Activated T-helper 2 cell treated with anti-CD3 and anti-CD28 coated beads, Interferon-gamma antibody, Interleukin-2, Interleukin-4, amounts not matched to agents 10 μg/mL and 5 μg/mL and 100 μg/mL, durations not matched to agents 14 hours and 24 hours and 36 hours (primary cell): ENCODE measurements at regions of chr17 and their contacts with region 1.

Region 1: DNA sequence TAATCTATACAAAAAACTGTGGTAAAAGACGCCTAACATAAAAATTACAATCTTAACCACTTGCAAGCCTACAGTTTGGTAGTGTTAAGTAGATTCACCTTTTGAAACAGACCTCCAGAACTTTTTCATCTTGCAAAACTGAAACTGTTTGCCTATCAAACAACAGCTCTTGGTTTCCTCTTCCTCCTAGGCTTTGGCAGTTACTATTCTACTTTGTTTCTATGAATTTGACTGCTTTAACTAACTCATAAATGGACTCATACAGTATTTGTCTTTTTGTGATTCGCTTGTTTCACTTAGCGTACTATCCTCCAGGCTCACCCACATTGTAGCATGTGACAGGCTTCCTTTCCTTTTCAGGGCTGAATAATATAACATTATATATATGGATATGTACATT is 97.0 kb downstream of the PRKCA start:
- DNase-seq: no peak
- H3K4me3 Mint-ChIP-seq: peak overlapping the region; percentile 47
- H3K27ac Mint-ChIP-seq: peak overlapping the region; percentile 86
- H3K4me1 Mint-ChIP-seq: peaks cover 80% of the 10 kb centered on the region
- H3K27me3 Mint-ChIP-seq: no peaks in the 10 kb centered on the region

Region 2: GRCh38 chr17:66310528-66311148 is 88.8 kb before region 1 on chr17:
- intact Hi-C with region 1: loop called (anchors 1 kb)
- DNase-seq: no peak
- H3K4me3 Mint-ChIP-seq: peak overlapping the region; percentile 71
- H3K27ac Mint-ChIP-seq: peak overlapping the region; percentile 92
- H3K4me1 Mint-ChIP-seq: peaks cover 84% of the 10 kb centered on the region
- H3K27me3 Mint-ChIP-seq: no peaks in the 10 kb centered on the region

Region 3: DNA sequence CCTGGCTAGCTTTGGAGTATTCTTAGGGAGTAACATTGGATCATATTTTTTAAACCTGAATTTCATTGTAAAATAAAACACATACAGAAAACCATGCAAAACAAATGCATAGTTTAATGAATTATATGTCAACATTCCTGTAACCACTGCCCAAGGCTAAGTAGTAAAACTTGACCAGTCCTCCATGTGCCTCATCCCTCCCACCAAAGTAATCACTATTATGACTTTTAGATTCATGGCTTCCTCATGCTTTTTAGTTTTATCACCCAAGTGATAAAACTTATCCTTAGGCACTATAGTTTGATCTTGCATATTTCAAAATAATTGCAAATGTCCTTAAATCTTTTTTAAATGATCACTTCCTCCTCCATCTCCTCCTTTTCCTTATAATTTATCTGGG is 76.7 kb before region 1 on chr17:
- intact Hi-C with region 1: no loop called
- DNase-seq: no peak
- H3K4me3 Mint-ChIP-seq: no peak overlapping the region
- H3K27ac Mint-ChIP-seq: no peak overlapping the region
- H3K4me1 Mint-ChIP-seq: peaks cover 42% of the 10 kb centered on the region
- H3K27me3 Mint-ChIP-seq: no peaks in the 10 kb centered on the region

Region 4: GRCh38 chr17:66364990-66365490 is 34.4 kb before region 1 on chr17:
- intact Hi-C with region 1: loop called (anchors 1 kb)
- DNase-seq: no peak
- H3K4me3 Mint-ChIP-seq: peak overlapping the region; percentile 72
- H3K27ac Mint-ChIP-seq: peak overlapping the region; percentile 94
- H3K4me1 Mint-ChIP-seq: peaks cover 84% of the 10 kb centered on the region
- H3K27me3 Mint-ChIP-seq: no peaks in the 10 kb centered on the region

Region 5: GRCh38 chr17:66373944-66374817 is 25.3 kb before region 1 on chr17:
- intact Hi-C with region 1: loop called (anchors 1 kb)
- DNase-seq: peak; percentile 53
- H3K4me3 Mint-ChIP-seq: peak overlapping the region; percentile 64
- H3K27ac Mint-ChIP-seq: peak overlapping the region; percentile 89
- H3K4me1 Mint-ChIP-seq: peaks cover 67% of the 10 kb centered on the region
- H3K27me3 Mint-ChIP-seq: no peaks in the 10 kb centered on the region

Region 6: DNA sequence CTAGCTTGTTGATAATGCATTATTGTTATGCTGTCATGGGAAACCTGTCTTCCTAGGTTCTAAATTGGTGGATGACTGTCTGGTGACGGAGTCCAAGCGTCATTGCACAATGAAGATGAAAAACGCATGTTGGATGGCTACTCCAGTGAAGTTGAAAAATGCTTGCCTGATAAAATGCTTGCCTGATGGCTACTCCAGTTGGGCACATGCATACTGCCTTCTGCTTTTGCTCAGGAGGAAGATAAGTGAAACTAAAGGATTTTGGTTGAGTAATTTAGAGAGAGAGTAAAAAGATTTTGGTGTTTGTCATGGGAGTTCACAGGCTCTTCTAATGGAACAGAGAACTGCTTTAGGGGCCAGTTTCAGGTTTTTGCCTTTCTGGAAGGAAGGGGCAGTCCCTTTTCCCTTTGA is 21.5 kb after region 1 on chr17:
- intact Hi-C with region 1: loop called (anchors 1 kb)
- DNase-seq: no peak
- H3K4me3 Mint-ChIP-seq: no peak overlapping the region
- H3K27ac Mint-ChIP-seq: peak overlapping the region; percentile 48
- H3K4me1 Mint-ChIP-seq: peaks cover 69% of the 10 kb centered on the region
- H3K27me3 Mint-ChIP-seq: no peaks in the 10 kb centered on the region

Region 7: GRCh38 chr17:66431910-66432683 is 32.7 kb after region 1 on chr17:
- intact Hi-C with region 1: no loop called
- DNase-seq: no peak
- H3K4me3 Mint-ChIP-seq: no peak overlapping the region
- H3K27ac Mint-ChIP-seq: peak overlapping the region; percentile 9
- H3K4me1 Mint-ChIP-seq: peaks cover 44% of the 10 kb centered on the region
- H3K27me3 Mint-ChIP-seq: no peaks in the 10 kb centered on the region

Region 8: DNA sequence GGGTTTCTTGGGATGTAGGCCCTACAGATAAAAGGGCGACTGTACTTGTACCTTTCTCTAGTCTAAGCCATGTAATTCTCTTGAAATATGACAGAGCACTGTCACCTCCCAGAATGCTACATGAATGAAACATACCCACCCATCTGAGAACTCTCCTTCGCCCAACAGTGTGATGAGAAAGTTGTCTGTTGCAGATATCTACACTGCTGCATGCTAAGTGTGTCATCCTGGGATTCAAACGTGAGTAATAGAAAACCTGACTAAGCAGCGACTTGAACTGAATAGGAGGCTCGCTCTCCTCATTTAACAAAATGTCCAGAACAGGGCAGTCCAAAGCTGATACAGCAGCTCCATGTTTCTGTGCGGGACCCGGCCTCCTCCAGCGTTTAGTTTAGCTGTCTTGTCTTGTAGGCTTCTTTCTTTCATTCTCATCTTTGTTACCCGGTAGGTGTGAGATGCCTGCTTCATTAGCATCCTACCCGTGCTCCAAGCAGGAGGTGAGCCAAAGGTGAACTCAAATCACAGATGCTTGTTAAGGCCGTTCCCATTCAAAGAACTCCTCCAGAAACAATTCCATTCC is 114.9 kb after region 1 on chr17:
- intact Hi-C with region 1: loop called (anchors 2 kb)
- DNase-seq: no peak
- H3K4me3 Mint-ChIP-seq: no peak overlapping the region
- H3K27ac Mint-ChIP-seq: peak overlapping the region; percentile 69
- H3K4me1 Mint-ChIP-seq: peaks cover 70% of the 10 kb centered on the region
- H3K27me3 Mint-ChIP-seq: no peaks in the 10 kb centered on the region

Region 9: GRCh38 chr17:66549731-66550207 is 150.3 kb after region 1 on chr17:
- intact Hi-C with region 1: loop called (anchors 2 kb)
- DNase-seq: no peak
- H3K4me3 Mint-ChIP-seq: no peak overlapping the region
- H3K27ac Mint-ChIP-seq: peak overlapping the region; percentile 14
- H3K4me1 Mint-ChIP-seq: peaks cover 46% of the 10 kb centered on the region
- H3K27me3 Mint-ChIP-seq: no peaks in the 10 kb centered on the region